Ovary (tissue), 10 donors: ENCODE measurements at regions of chr2 and their contacts with region 1.

Region 1: GRCh38 chr2:139438462-139438861 is 658.3 kb upstream of the NXPH2 start:
- DNase-seq: no peak
- H3K4me3 ChIP-seq: no peak overlapping the region
- H3K27ac ChIP-seq: no peak overlapping the region
- H3K4me1 ChIP-seq: no peaks in the 10 kb centered on the region
- H3K27me3 ChIP-seq: no peaks in the 10 kb centered on the region
- CTCF ChIP-seq: no peak
- EP300 ChIP-seq: no peak
- POLR2A ChIP-seq: no peak

Region 2: GRCh38 chr2:137444970-137445369 is 1993.5 kb before region 1 on chr2:
- intact Hi-C with region 1: loop called in 1 of 4 experiments (anchors 5 kb)
- DNase-seq: no peak
- H3K4me3 ChIP-seq: no peak overlapping the region
- H3K27ac ChIP-seq: no peak overlapping the region
- H3K4me1 ChIP-seq: no peaks in the 10 kb centered on the region
- H3K27me3 ChIP-seq: no peaks in the 10 kb centered on the region
- CTCF ChIP-seq: no peak
- EP300 ChIP-seq: no peak
- POLR2A ChIP-seq: no peak